PC-3 (cell line): ENCODE measurements at regions of chr9 and their contacts with region 1.

Region 1: GRCh38 chr9:95116003-95116807 is 201.3 kb downstream of the FANCC start:
- DNase-seq: peak; percentile 80
- ATAC-seq: peak; percentile 90
- H3K4me3 ChIP-seq: no peak overlapping the region
- H3K27ac ChIP-seq: peak overlapping the region; percentile 45
- H3K4me1 ChIP-seq: peaks cover 20% of the 10 kb centered on the region
- H3K27me3 ChIP-seq: no peaks in the 10 kb centered on the region
- CTCF ChIP-seq: peak; percentile 86

Region 2: GRCh38 chr9:94917840-94918753 is 198.1 kb before region 1 on chr9:
- CTCF ChIA-PET with region 1: no interaction called
- POLR2A ChIA-PET with region 1: no interaction called
- intact Hi-C with region 1: loop called (anchors 10 kb)
- DNase-seq: no peak
- ATAC-seq: no peak
- H3K4me3 ChIP-seq: no peak overlapping the region
- H3K27ac ChIP-seq: peak overlapping the region; percentile 78
- H3K4me1 ChIP-seq: peaks cover 94% of the 10 kb centered on the region
- H3K27me3 ChIP-seq: no peaks in the 10 kb centered on the region
- CTCF ChIP-seq: no peak

Region 3: DNA sequence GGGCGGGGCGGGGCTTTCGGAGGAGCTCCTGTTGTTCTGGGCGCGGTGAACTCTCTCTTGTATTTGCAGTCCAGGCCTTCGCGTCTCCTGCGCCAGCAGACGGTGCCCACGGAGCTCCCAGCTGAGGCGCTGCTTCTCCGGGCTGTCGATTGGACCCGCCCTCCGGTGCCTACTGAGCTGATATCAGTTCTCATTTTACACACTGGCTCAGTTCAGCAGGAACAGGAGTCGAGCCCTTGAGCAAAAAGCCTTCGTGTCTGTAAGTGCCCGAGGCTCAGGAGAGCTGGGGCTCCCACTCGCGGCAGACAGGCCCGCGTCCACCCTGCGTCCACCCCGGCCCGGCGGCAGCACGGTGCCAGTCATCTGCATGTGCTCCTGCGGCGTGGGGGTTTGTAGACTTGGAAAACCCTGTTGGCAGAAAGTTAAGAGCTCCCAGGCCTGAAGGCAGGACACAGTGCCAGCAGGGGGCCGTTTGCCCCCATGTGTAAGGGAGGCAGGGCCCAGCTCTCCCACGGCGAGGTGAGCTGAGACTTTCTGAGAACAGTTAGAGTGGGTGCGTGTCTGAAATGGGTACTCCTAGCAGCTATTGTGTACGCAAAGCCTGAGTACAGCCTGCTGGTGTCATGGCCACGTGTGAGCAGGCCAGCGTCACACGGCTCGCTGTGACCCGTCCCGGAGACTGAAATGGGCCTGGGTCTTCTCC is 30.2 kb before region 1 on chr9:
- CTCF ChIA-PET with region 1: no interaction called
- POLR2A ChIA-PET with region 1: no interaction called
- intact Hi-C with region 1: no loop called
- DNase-seq: no peak
- ATAC-seq: no peak
- H3K4me3 ChIP-seq: no peak overlapping the region
- H3K27ac ChIP-seq: no peak overlapping the region
- H3K4me1 ChIP-seq: peaks cover 3% of the 10 kb centered on the region; the same call in 1 of the 2 replicates
- H3K27me3 ChIP-seq: no peaks in the 10 kb centered on the region
- CTCF ChIP-seq: no peak